Left ventricle myocardium inferior (tissue), 1 donor: ENCODE measurements at regions of chr15 and their contacts with region 1.

Region 1: GRCh38 chr15:31101262-31102038 is at the start of gene TRPM1:
- DNase-seq: no peak
- H3K4me3 ChIP-seq: no peak within 1 kb of the TSS
- H3K27ac ChIP-seq: no peak within 1 kb of the TSS
- H3K4me1 ChIP-seq: no peaks in the 10 kb centered on the region
- H3K27me3 ChIP-seq: peaks cover 11% of the 10 kb centered on the region
- CTCF ChIP-seq: no peak
- total RNA-seq, gene TRPM1: not detected

Region 2: DNA sequence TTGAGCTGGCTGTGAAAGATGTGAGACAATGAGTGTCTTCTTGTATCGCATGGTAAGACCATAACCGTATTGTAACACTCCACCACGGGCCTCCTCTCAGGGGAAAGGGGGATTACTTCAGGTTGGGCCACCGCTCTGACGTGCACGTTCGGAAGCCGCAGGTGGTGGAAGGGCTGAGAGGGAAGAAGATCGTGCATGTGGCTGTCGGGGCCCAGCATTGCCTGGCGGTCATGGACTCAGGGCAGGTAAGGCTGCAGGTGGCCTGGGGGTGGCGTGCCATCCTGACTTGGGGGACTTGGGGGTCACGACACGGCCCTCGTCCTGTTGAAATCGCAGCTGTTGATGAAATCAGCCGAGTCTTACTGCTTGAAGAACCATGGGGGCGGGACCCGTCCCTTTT is 285.0 kb before region 1 on chr15:
- intact Hi-C with region 1: no loop called
- DNase-seq: no peak
- H3K4me3 ChIP-seq: no peak overlapping the region
- H3K27ac ChIP-seq: no peak overlapping the region
- H3K4me1 ChIP-seq: no peaks in the 10 kb centered on the region
- H3K27me3 ChIP-seq: no peaks in the 10 kb centered on the region
- CTCF ChIP-seq: no peak

Region 3: GRCh38 chr15:30885814-30886213 is 215.6 kb before region 1 on chr15:
- intact Hi-C with region 1: loop called (anchors 5 kb)
- DNase-seq: no peak
- H3K4me3 ChIP-seq: no peak overlapping the region
- H3K27ac ChIP-seq: no peak overlapping the region
- H3K4me1 ChIP-seq: no peaks in the 10 kb centered on the region
- H3K27me3 ChIP-seq: no peaks in the 10 kb centered on the region
- CTCF ChIP-seq: no peak

Region 4: GRCh38 chr15:31179693-31180092 is 78.2 kb after region 1 on chr15:
- intact Hi-C with region 1: no loop called
- DNase-seq: no peak
- H3K4me3 ChIP-seq: no peak overlapping the region
- H3K27ac ChIP-seq: no peak overlapping the region
- H3K4me1 ChIP-seq: no peaks in the 10 kb centered on the region
- H3K27me3 ChIP-seq: no peaks in the 10 kb centered on the region
- CTCF ChIP-seq: no peak